ENCODE measurements at regions of chr9 and their contacts with region 1.

Region 1: GRCh38 chr9:126690431-126691350 is 77.0 kb downstream of the LMX1B start:
- DNase-seq: peak in 1 of 2 donors; percentile 46
- ATAC-seq: peak in 3 of 4 donors; percentile 47 to 52 (median 49)
- H3K4me3 ChIP-seq: no peak overlapping the region
- H3K27ac ChIP-seq: no peak overlapping the region
- H3K4me1 ChIP-seq: no peaks in the 10 kb centered on the region
- H3K27me3 ChIP-seq: peaks cover 0 to 40% (median 9%) of the 10 kb centered on the region in 3 donors
- CTCF ChIP-seq: peak; percentile 49

Region 2: DNA sequence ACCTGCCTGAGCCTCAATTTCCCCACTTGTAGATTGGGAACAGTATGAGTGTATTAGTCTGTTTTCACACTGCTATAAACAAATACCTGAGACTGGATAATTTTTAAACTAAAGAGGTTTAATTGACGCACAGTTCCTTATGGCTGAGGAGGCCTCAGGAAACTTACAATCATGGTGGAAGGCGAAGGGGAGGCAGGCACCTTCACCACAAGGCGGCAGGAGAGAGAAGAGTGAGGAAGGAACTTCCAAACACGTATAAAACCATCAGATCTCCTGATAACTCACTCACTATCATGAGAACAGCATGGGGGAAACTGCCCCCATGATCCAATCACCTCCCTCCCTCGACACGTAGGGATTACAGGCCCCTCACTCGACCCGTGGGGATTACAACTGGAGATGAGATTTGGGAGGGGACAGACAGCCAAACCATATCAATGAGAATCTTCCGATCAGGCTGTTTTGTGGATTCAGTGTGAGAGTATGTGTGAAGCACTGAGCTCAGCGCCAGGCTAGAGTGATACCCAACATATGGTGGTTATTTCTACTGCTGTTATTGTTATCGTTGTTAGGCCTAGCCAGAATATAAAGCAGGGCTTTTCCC is 91.5 kb before region 1 on chr9:
- intact Hi-C with region 1: no loop called
- DNase-seq: no peak
- ATAC-seq: no peak
- H3K4me3 ChIP-seq: no peak overlapping the region
- H3K27ac ChIP-seq: no peak overlapping the region
- H3K4me1 ChIP-seq: no peaks in the 10 kb centered on the region
- H3K27me3 ChIP-seq: peaks cover 0 to 25% (median 2%) of the 10 kb centered on the region in 3 donors
- CTCF ChIP-seq: no peak

Region 3: DNA sequence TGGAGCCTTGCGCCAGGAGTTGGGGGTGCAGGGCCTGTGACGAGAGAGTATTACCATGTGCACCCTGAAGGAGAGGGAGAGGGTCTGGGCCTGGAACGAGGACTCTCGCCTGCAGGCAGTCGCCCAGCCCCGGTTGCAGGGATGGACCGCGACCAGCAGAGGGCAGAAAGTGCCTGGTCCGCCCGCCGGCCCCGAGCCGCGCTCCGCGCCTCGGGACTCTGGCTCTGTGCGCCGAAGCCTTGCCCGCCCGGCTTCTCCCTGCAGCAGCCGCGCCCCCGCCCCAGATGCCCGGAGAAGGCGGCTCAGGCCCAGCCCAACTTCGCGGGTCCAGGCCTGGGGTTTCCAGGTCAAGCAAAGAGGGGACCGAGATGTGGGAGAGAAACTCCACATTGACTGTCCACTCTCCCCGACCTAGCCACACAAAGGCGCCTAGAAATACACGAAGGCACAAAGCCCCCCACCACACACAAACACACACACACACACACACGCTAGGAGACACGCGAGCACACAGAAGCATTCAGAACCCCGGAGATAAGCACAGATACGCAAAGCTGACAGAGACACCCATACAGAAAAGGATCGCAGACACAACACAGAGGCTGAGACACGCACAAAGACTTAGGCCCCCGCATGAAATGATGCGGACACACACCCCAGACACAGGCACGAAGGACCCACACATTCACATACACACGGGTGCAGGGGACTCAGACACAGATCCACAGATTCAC is 78.9 kb before region 1 on chr9:
- intact Hi-C with region 1: loop called in 1 of 2 experiments (anchors 5 kb)
- DNase-seq: peak; percentile 77 to 87
- ATAC-seq: peak; percentile 86 to 94 (median 90)
- H3K4me3 ChIP-seq: peak overlapping the region; percentile 60
- H3K27ac ChIP-seq: no peak overlapping the region
- H3K4me1 ChIP-seq: peaks cover 13% of the 10 kb centered on the region
- H3K27me3 ChIP-seq: peaks cover 3 to 78% (median 42%) of the 10 kb centered on the region in 3 donors
- CTCF ChIP-seq: peak; percentile 85

Region 4: GRCh38 chr9:126662221-126662922 is 28.3 kb before region 1 on chr9:
- intact Hi-C with region 1: no loop called
- DNase-seq: no peak
- ATAC-seq: no peak
- H3K4me3 ChIP-seq: no peak overlapping the region
- H3K27ac ChIP-seq: no peak overlapping the region
- H3K4me1 ChIP-seq: peaks cover 5% of the 10 kb centered on the region
- H3K27me3 ChIP-seq: peaks cover 0 to 2% (median 2%) of the 10 kb centered on the region in 3 donors
- CTCF ChIP-seq: no peak

Measured in psoas muscle (tissue), 8 donors.